Mammary epithelial cell (primary cell): ENCODE measurements at regions of chr2 and their contacts with region 1.

Region 1: DNA sequence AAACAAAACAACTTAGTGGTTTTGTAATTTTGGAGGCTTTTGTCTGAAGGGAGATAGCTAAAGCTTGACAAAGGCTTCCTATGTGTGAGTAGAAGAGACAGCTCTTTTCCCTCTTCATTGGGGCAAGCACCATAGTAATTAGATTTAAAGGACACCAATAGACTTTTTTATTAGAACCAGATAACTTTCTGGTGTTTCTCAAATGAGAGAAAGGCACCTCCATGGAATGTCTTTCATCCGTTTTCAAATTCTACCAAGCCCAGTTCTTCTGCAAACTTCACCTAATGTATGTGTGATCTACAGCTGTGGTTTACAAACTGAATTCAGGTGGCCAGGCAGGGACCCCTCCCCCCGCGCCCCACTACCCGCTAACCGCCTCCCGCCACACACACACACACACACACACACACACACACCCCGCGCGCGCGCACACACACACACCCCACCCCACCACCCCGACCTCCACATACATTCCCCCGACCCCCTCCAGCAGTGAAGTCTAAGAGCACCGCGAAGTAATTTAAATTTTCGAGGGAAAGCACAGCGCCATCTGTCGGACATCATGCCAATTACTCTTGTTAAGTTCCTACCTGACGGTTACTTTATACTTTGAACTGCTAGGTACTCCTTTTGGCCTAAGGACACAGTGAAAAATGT is 31.6 kb upstream of the PPP1R1C start:
- DNase-seq: peak; percentile 28
- H3K4me3 ChIP-seq: peak overlapping the region in 1 of 3 experiments; percentile 2
- H3K27ac ChIP-seq: peak overlapping the region; percentile 78
- H3K4me1 ChIP-seq: peaks cover 22% of the 10 kb centered on the region
- H3K27me3 ChIP-seq: no peaks in the 10 kb centered on the region
- CTCF ChIP-seq: peak; percentile 45 to 61

Region 2: GRCh38 chr2:182014284-182014683 is 60.3 kb after region 1 on chr2:
- CTCF ChIA-PET with region 1: interaction called, 14 read pairs
- dilution Hi-C with region 1: no loop called
- in situ Hi-C with region 1: no loop called
- intact Hi-C with region 1: no loop called
- DNase-seq: no peak
- H3K4me3 ChIP-seq: no peak overlapping the region
- H3K27ac ChIP-seq: no peak overlapping the region
- H3K4me1 ChIP-seq: peaks cover 6% of the 10 kb centered on the region
- H3K27me3 ChIP-seq: no peaks in the 10 kb centered on the region
- CTCF ChIP-seq: no peak